Activated T-helper 1 cell treated with anti-CD3 and anti-CD28 coated beads, Interleukin-12 subunit alpha, Interleukin-12 subunit beta, Interleukin-2, Interleukin-4 antibody, amounts not matched to agents 30 ng/mL and 10 ng/mL and 1 ng/mL, durations not matched to agents 14 hours and 24 hours and 36 hours (primary cell): ENCODE measurements at regions of chr5 and their contacts with region 1.

Region 1: DNA sequence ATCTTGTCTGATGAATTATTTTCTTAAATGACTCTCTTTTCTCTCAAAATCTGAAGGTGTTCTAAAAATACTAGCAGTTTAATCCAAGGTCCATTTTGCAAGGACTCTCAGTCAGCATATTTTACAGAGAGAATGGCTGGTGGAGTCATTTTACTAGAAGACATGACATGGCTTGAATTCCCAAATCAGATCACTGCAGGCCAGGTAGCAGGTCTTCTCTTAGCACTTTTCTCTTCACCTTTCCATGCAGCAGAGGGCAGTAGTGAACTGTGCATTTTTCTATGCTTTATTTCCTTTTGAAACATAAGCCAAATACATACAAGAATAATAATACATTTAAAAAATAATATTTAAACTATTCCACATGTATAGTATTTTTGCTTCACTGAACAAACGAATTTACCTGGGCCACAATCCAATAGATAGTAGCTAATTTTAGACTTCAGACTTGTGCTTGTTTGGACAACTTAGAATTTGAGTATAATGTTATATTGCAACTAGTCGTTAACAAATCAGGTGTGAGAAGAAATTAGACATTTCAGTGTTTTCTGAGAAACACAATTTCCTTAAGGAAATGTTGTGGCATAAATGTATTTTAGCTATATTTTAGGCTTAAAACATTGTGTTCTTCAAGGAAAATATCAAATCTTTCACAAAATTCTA is 289.4 kb upstream of the DAB2 start:
- DNase-seq: no peak
- H3K4me3 Mint-ChIP-seq: no peak overlapping the region
- H3K27ac Mint-ChIP-seq: no peak overlapping the region
- H3K4me1 Mint-ChIP-seq: no peaks in the 10 kb centered on the region
- H3K27me3 Mint-ChIP-seq: peaks cover 5% of the 10 kb centered on the region

Region 2: DNA sequence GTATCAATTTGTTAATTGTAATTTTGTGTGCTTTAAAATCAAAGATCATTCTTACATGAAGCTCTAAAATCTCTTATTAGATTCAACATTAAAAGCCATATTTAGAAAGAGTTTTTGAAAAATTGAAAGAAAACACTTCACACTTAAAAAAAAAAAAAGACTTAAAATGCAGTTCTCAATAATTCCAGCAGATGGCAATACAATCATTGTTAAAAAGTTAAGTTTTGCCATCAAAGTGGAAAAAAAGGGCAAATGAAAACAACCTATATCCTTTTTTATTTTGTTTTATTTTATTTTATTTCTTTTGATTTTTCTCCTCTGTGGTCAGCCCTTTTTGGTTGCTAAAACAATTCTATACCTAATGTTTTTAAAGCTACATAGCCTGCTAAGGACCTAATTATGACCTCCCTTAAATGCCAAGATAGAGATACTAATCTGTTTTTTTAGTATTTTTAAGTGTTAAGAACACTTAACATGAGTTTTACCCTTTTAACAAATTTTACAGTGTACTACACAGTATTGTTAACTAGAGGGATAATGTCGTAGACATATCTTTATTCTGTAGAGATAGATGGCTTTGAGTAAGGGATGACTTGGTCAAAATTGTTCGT is 135.2 kb before region 1 on chr5:
- intact Hi-C with region 1: loop called (anchors 5 kb)
- DNase-seq: no peak
- H3K4me3 Mint-ChIP-seq: no peak overlapping the region
- H3K27ac Mint-ChIP-seq: no peak overlapping the region
- H3K4me1 Mint-ChIP-seq: peaks cover 8% of the 10 kb centered on the region
- H3K27me3 Mint-ChIP-seq: peaks cover 17% of the 10 kb centered on the region